Posterior cingulate gyrus (tissue), 11 donors: ENCODE measurements at regions of chr7 and their contacts with region 1.

Region 1: GRCh38 chr7:137454246-137454724 is 110.8 kb upstream of the PTN start:
- DNase-seq: no peak

Region 2: GRCh38 chr7:137169282-137169698 is 285.0 kb before region 1 on chr7:
- intact Hi-C with region 1: loop called (anchors 1 kb)
- DNase-seq: peak; percentile 26 to 93 (median 66)

Region 3: GRCh38 chr7:137287651-137288258 is 166.5 kb before region 1 on chr7:
- intact Hi-C with region 1: loop called (anchors 5 kb)
- DNase-seq: no peak

Region 4: GRCh38 chr7:137343281-137343841 is 110.9 kb before region 1 on chr7 and contains the start of gene PTN:
- intact Hi-C with region 1: loop called (anchors 5 kb)
- DNase-seq: peak; percentile 28 to 90 (median 50)

Region 5: GRCh38 chr7:137592232-137592896 is 138.1 kb after region 1 on chr7:
- intact Hi-C with region 1: loop called (anchors 5 kb)
- DNase-seq: peak; percentile 49 to 95 (median 71)